ENCODE measurements at regions of chr9 and their contacts with region 1.

Region 1: DNA sequence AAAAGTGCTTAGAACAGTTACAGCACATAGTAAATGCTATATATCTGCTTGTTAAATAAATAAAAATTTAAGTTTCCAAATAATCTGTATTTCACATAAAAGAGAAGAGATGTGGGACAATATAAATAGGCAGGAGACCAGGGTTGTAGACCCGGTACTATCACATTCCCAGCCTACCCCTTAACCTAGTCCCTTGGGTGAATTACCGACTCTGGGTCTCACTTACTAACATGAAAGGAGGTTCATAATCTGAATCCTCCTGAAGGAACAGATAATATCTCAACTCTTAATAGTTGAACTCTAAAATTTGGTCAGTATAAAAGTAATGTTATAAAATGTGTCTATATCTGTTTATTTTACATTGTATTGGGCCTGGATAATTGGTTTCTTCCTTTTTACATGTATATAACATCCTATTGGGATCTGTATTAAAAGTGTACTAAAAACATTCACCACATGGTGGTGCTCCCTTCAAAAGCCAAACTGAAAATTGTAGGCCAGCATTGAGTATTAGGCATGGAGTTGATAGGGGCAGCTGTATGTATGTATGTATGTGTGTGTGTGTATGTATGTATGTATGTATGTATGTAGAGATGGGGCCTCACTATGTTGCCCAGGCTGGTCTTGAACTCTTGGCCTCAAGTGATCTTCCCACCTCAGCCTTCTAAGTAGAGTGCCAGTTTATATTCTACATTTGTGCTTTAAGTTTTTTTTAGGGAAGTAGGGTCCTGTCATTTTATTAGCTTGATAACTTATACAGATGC is 64.2 kb upstream of the ABL1 start:
- DNase-seq: peak; percentile 37
- H3K4me3 ChIP-seq: no peak overlapping the region
- CTCF ChIP-seq: peak; percentile 41

Region 2: DNA sequence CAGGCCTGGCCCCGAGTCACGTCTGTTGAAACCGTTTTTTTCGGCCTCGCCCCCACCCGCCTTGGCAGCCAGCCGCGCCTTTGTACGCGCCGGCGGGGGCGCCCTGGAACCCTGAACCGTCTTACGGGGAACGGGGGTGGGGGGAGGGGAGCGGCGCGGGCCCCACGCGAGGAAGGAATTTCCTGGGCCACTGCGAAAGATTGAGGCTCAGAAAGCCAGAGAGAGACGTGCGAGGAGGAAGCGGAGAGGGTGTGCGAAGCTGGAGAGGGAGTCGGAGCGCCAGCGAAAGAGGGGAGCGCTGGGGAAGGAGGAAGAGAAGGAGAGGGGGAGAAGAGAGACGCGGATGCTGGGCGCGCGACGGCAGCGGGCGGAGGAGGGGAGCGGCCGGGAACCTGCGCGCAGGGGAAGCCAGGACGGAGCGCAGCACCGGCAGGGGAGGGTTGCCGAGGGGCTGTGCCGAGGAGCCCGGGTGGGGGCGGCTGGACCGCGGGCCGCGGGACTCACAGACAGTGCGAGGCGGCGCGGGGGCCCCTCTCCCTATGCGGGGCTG is 111.1 kb before region 1 on chr9:
- CTCF ChIA-PET with region 1: no interaction called
- POLR2A ChIA-PET with region 1: no interaction called
- DNase-seq: no peak
- H3K4me3 ChIP-seq: no peak overlapping the region
- CTCF ChIP-seq: no peak

Region 3: DNA sequence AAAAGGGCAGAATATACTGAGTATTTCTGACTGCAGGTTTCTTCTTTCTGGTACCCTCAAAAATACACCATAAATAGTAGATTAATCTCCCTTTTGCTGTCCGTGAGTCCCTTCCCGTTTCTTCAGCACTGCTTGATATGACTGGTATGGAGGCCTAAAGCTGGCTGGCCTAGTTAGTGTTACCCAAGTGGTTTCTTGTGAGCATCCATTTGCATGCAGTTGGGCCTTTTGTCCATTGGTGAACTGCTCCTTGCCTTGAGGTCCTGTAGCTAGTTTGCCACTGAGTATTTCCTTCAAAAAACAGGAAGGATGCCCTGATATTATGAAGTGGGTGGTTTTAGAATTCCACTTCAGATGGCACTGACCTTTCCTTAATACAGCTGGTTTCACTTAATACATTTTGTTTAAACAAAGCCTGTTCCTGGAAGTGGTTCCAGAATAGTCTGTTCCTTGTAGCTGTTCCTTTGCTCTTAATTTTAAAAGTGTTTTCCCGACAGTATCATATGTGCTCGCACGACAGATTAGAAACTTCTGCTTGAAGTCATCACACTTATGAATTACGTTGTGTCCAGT is 24.1 kb after region 1 on chr9:
- CTCF ChIA-PET with region 1: interaction called, 11 read pairs
- POLR2A ChIA-PET with region 1: no interaction called
- DNase-seq: no peak
- H3K4me3 ChIP-seq: no peak overlapping the region
- CTCF ChIP-seq: no peak

Region 4: DNA sequence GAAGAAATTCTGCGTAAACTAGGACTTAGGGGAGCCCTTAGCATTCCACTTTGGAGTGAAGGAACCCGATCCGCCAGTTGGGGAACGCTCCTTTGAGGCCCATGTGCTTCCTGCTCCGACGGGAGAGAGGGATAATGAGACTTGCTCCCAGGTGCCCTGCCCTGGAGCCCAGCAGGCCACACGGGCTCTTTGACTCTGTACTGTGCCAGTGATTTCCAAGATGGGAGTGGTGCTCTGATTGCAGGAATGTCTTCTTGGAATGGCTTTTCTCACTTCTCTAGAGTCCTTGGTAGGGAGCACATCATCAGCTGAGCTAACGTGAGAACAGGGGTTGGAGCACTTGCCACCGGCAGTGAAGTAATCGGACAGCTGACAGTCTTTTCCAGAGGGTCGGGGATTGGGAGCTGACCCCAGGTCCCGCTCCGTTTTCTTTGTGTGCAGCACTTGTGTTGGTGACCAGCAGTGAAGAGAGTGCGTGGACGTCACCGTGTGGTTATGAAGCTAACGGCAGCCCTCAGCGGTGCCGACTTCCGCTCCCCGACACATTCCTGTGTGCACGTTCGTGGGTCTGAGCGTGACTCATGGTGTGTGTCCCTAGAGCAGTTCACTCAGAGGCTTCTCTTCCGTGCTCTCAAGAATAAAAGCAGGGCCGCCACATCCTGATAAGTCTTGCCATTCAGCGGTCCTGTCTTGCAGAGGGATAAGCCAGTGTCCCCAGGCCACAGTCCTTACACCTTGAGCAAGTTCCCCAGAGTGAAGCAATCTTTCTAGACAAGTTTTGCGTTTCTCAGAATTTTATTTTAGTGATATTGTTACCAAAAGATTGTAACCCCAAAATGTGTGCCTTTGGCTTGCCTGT is 89.8 kb after region 1 on chr9:
- CTCF ChIA-PET with region 1: interaction called, 311 read pairs
- POLR2A ChIA-PET with region 1: no interaction called
- DNase-seq: peak; percentile 95
- H3K4me3 ChIP-seq: no peak overlapping the region; the same call in 1 of the 2 replicates
- CTCF ChIP-seq: peak; percentile 54

Region 5: DNA sequence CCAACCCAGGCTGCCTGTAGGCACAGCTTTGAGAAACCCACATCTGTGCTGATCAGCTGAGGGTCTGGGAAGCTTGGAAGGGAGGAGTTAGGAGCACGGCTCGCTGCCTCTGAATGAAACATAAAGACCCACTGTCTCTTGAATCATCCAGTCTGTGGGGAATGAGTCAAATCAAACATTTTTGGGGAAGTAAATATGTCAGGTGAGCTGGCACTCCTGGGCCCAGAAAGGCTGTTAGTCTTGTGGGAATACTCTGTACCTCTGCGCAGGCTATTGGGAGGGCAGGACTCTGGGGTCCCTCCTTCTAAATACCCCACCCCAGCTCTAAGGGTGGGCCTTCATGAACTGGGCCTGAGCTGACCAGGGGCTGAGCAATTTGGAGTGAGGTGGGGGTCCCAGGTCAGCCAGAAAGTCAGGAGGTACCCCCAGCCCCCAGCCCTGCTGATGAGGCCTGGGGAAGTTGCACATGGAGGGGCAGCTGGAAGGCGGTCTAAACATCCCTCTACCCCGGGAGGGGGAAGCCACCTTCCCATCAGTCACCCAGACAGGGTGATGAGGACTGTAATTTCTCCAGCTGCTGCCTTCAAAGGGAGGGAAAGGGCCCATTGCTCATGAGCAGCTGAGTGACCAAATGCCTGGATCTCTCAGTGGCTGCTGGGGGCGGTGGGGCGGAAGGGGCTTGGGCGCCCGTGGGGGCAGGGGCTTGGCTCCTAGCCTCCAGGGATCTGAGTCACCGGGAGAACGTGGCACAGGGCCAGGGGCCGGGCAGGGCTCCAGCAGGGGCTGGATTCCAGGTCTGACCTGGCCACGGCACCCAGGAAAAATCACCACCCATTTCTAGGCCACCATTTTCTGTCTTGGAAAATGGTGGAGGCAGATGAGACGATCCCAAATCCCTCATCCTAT is 157.4 kb after region 1 on chr9:
- CTCF ChIA-PET with region 1: no interaction called
- POLR2A ChIA-PET with region 1: no interaction called
- DNase-seq: no peak
- H3K4me3 ChIP-seq: no peak overlapping the region
- CTCF ChIP-seq: no peak

Measured in AG04449 (cell line).